CD8-positive, alpha-beta T cell (primary cell): ENCODE measurements at regions of chr1 and their contacts with region 1.

Region 1: GRCh38 chr1:180521474-180522207 is 19.3 kb upstream of the ACBD6 start:
- DNase-seq: no peak
- ATAC-seq: no peak
- H3K4me3 ChIP-seq: no peak overlapping the region
- H3K4me3 Mint-ChIP-seq: no peak overlapping the region
- H3K27ac ChIP-seq: no peak overlapping the region
- H3K27ac Mint-ChIP-seq: no peak overlapping the region
- H3K4me1 ChIP-seq: no peaks in the 10 kb centered on the region
- H3K4me1 Mint-ChIP-seq: no peaks in the 10 kb centered on the region
- H3K27me3 ChIP-seq: no peaks in the 10 kb centered on the region
- H3K27me3 Mint-ChIP-seq: peaks cover 8% of the 10 kb centered on the region
- CTCF ChIP-seq: no peak

Region 2: DNA sequence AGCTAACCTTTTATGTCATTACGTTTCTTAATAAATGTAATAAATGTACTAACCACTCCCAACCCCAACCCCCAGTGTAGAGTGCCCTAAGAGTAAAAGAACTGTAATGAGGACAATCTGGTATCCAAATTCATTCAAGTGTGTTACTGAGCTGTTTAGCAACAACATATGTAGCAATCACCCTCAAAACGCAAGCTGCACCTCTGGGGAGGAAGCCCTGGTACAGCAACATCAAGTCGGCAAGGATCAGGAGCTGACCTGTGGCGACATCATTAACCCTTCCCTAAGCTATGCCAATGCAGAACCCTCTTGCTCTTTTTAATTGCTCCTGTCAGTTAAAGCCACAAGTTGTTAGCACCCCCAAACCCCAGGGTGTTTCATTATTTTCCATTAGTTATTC is 453.9 kb after region 1 on chr1:
- CTCF ChIA-PET with region 1: no interaction called
- POLR2A ChIA-PET with region 1: no interaction called
- intact Hi-C with region 1: loop called in 1 of 2 experiments (anchors 5 kb)
- DNase-seq: no peak
- ATAC-seq: no peak
- H3K4me3 ChIP-seq: no peak overlapping the region
- H3K4me3 Mint-ChIP-seq: no peak overlapping the region
- H3K27ac ChIP-seq: no peak overlapping the region
- H3K27ac Mint-ChIP-seq: no peak overlapping the region
- H3K4me1 ChIP-seq: no peaks in the 10 kb centered on the region
- H3K4me1 Mint-ChIP-seq: peaks cover 24% of the 10 kb centered on the region
- H3K27me3 ChIP-seq: no peaks in the 10 kb centered on the region
- H3K27me3 Mint-ChIP-seq: no peaks in the 10 kb centered on the region
- CTCF ChIP-seq: no peak